CD8-positive, alpha-beta T cell (primary cell): ENCODE measurements at regions of chr12 and their contacts with region 1.

Region 1: GRCh38 chr12:92145731-92146496 is at the start of gene BTG1:
- DNase-seq: peak; percentile 96 to 100 (median 98)
- ATAC-seq: peak; percentile 72
- H3K4me3 ChIP-seq: peak within 1 kb of the TSS; percentile 91 to 95
- H3K4me3 Mint-ChIP-seq: peak within 1 kb of the TSS; percentile 96
- H3K27ac ChIP-seq: peak within 1 kb of the TSS; percentile 90 to 92
- H3K27ac Mint-ChIP-seq: peak within 1 kb of the TSS; percentile 99
- H3K4me1 ChIP-seq: peaks cover 23% of the 10 kb centered on the region
- H3K4me1 Mint-ChIP-seq: peaks cover 27% of the 10 kb centered on the region
- H3K27me3 ChIP-seq: no peaks in the 10 kb centered on the region
- H3K27me3 Mint-ChIP-seq: no peaks in the 10 kb centered on the region
- CTCF ChIP-seq: no peak
- total RNA-seq, gene BTG1: 1,847 to 1,850 TPM

Region 2: DNA sequence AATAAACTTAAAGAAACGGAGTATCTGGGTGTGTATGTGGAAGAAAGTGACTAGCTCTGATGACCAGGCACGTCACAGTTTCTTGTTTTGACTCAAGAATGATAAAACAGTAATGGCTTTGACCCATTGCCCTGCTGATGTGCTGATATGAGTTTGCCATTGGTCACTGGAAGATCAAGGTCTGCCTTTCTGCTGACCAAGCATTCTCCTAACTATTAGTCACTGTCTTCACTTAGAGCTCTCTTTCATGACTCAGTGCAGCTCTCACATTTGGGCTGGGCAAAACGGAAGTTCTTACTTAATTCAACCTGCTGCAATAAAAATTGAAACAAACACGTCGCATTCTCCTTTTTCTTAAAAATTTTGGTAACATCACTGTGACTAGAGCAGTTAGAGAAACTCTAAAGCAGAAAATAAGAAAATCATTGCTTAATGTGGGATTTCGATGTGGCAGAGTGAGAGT is 366.9 kb before region 1 on chr12:
- CTCF ChIA-PET with region 1: no interaction called
- POLR2A ChIA-PET with region 1: interaction called, 15 read pairs
- intact Hi-C with region 1: no loop called
- DNase-seq: peak in 8 of 9 experiments; percentile 0 to 68 (median 46)
- ATAC-seq: peak; percentile 85
- H3K4me3 ChIP-seq: peak overlapping the region; percentile 18 to 28
- H3K4me3 Mint-ChIP-seq: peak overlapping the region; percentile 71
- H3K27ac ChIP-seq: peak overlapping the region; percentile 54 to 62
- H3K27ac Mint-ChIP-seq: peak overlapping the region; percentile 92
- H3K4me1 ChIP-seq: peaks cover 28% of the 10 kb centered on the region
- H3K4me1 Mint-ChIP-seq: peaks cover 46% of the 10 kb centered on the region
- H3K27me3 ChIP-seq: no peaks in the 10 kb centered on the region
- H3K27me3 Mint-ChIP-seq: no peaks in the 10 kb centered on the region
- CTCF ChIP-seq: no peak

Region 3: DNA sequence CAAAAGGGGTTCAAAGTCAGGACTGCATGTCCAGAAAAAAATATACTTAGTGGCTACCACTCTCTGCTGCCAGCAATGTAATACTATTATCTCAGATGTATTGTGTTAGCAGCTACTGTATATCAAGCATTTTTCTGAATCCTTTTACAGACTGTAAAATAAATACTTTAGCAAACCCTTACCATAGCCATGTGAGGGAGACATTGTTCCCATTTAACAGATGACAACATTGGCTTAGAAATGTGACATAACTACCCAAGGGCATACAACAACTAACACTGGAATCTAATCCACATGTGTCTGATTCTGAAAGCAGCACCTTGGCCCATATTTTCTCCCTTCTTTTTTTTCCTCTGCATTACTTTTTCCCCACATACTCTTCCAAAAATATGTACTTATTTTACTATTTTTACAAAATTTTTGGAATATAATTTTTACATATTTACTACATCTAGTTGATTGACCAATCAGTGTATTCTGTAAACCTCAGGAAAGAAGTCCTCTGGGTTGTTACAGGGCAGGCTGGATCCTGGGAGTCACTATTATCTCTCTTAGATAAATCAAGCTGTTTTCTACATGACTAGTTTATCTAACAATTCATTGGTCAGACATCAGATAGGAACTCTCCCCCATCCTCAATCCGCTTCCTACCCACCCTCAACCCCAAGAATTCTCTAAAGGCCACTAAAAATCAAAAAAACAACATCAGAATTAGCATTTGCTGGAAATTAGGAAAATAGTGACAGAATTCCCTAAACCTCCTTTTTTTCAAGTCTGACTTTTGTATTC is 154.3 kb before region 1 on chr12:
- CTCF ChIA-PET with region 1: interaction called, 6 read pairs
- POLR2A ChIA-PET with region 1: interaction called, 41 read pairs
- intact Hi-C with region 1: loop called in 1 of 2 experiments (anchors 1 kb)
- DNase-seq: peak in 2 of 9 experiments; percentile 61 to 77
- ATAC-seq: peak; percentile 71
- H3K4me3 ChIP-seq: no peak overlapping the region
- H3K4me3 Mint-ChIP-seq: no peak overlapping the region
- H3K27ac ChIP-seq: no peak overlapping the region
- H3K27ac Mint-ChIP-seq: peak overlapping the region; percentile 66
- H3K4me1 ChIP-seq: peaks cover 25% of the 10 kb centered on the region
- H3K4me1 Mint-ChIP-seq: peaks cover 65% of the 10 kb centered on the region
- H3K27me3 ChIP-seq: no peaks in the 10 kb centered on the region
- H3K27me3 Mint-ChIP-seq: no peaks in the 10 kb centered on the region
- CTCF ChIP-seq: peak; percentile 28

Region 4: GRCh38 chr12:92158796-92159439 is 13.0 kb after region 1 on chr12:
- CTCF ChIA-PET with region 1: interaction called, 3 read pairs
- POLR2A ChIA-PET with region 1: interaction called, 20 read pairs
- intact Hi-C with region 1: no loop called
- DNase-seq: peak in 1 of 9 experiments; percentile 44
- ATAC-seq: peak; percentile 57
- H3K4me3 ChIP-seq: no peak overlapping the region
- H3K4me3 Mint-ChIP-seq: peak overlapping the region; percentile 62
- H3K27ac ChIP-seq: peak overlapping the region; percentile 6 to 54
- H3K27ac Mint-ChIP-seq: peak overlapping the region; percentile 90
- H3K4me1 ChIP-seq: peaks cover 49% of the 10 kb centered on the region
- H3K4me1 Mint-ChIP-seq: peaks cover 69% of the 10 kb centered on the region
- H3K27me3 ChIP-seq: no peaks in the 10 kb centered on the region
- H3K27me3 Mint-ChIP-seq: no peaks in the 10 kb centered on the region
- CTCF ChIP-seq: no peak

Region 5: DNA sequence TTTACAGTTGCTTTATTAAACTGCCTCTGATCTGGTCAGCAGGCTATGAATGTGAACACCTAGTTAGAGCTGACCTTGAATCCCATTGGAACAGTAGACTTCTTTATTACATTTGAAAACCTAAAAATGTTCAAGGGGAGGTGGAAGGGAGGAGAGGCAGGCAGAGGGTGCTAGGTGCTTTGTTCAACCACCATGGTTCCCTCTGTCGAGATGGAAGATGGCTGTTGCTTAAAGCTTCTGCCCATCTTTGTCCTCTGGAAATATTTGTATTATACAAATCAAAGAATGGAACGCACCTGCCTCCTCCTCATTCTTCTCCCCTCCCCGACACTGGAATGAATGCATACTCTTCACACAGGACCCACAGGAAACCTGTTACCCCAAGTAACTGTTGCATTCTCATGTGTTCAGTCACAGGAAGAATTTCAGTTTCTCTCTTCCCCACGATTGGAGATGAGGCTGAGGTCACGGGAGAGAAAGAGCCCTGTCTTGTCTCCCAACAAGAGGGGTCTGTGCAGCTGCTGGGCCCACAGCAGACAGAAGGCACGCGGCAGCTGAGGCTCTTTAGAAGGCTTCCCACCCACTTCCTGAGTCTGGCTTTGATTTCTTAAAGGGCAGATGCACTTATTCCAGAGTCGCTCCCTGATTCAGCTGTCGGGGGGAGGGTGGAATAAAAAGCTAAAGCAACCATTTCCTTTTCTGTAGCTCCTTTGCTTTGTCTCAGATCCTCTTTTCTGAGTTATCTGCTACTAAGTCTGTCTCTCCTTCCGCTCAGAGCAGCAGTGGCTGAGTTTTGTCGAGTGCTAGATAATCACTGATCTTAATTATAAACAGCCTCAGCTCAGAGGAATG is 217.6 kb after region 1 on chr12:
- CTCF ChIA-PET with region 1: interaction called, 5 read pairs
- POLR2A ChIA-PET with region 1: interaction called, 46 read pairs
- intact Hi-C with region 1: loop called in 1 of 2 experiments (anchors 2 kb)
- DNase-seq: peak; percentile 10 to 75 (median 61)
- ATAC-seq: peak; percentile 70
- H3K4me3 ChIP-seq: peak overlapping the region; percentile 27 to 39
- H3K4me3 Mint-ChIP-seq: peak overlapping the region; percentile 71
- H3K27ac ChIP-seq: peak overlapping the region; percentile 52 to 75
- H3K27ac Mint-ChIP-seq: peak overlapping the region; percentile 95
- H3K4me1 ChIP-seq: peaks cover 58% of the 10 kb centered on the region
- H3K4me1 Mint-ChIP-seq: peaks cover 71% of the 10 kb centered on the region
- H3K27me3 ChIP-seq: no peaks in the 10 kb centered on the region
- H3K27me3 Mint-ChIP-seq: no peaks in the 10 kb centered on the region
- CTCF ChIP-seq: no peak

Region 6: DNA sequence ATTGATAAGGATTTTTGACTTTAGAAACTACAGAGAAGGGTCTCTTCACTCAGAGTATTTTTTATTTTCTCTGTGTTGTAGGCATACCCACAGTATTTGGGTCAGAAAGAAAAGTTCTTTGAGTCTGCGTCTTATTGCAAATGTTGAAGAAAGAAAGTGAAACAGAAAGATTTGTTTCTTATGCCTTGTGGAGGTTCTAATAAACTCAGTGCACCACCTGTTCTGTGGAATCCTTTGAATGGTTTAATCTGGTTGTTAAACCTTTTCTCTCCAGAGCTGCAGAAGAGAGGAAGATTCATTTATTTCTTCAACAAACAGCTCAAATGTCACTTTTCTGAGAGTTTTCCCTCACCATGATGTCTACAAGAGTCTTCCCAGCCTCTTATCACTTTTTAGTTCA is 410.2 kb after region 1 on chr12:
- CTCF ChIA-PET with region 1: no interaction called
- POLR2A ChIA-PET with region 1: interaction called, 13 read pairs
- intact Hi-C with region 1: no loop called
- DNase-seq: peak in 1 of 9 experiments; percentile 56
- ATAC-seq: peak; percentile 79
- H3K4me3 ChIP-seq: peak overlapping the region; percentile 2 to 40
- H3K4me3 Mint-ChIP-seq: peak overlapping the region; percentile 76
- H3K27ac ChIP-seq: peak overlapping the region; percentile 28 to 45
- H3K27ac Mint-ChIP-seq: peak overlapping the region; percentile 86
- H3K4me1 ChIP-seq: peaks cover 27% of the 10 kb centered on the region
- H3K4me1 Mint-ChIP-seq: peaks cover 33% of the 10 kb centered on the region
- H3K27me3 ChIP-seq: no peaks in the 10 kb centered on the region
- H3K27me3 Mint-ChIP-seq: no peaks in the 10 kb centered on the region
- CTCF ChIP-seq: no peak

Region 7: GRCh38 chr12:92928962-92929915 is 783.3 kb after region 1 on chr12 and contains the start of gene EEA1:
- CTCF ChIA-PET with region 1: no interaction called
- POLR2A ChIA-PET with region 1: no interaction called
- intact Hi-C with region 1: loop called in 1 of 2 experiments (anchors 5 kb)
- DNase-seq: peak; percentile 88 to 97 (median 95)
- ATAC-seq: peak; percentile 84
- H3K4me3 ChIP-seq: peak within 1 kb of the TSS; percentile 71 to 78
- H3K4me3 Mint-ChIP-seq: peak within 1 kb of the TSS; percentile 85
- H3K27ac ChIP-seq: peak within 1 kb of the TSS; percentile 85 to 90
- H3K27ac Mint-ChIP-seq: peak within 1 kb of the TSS; percentile 95
- H3K4me1 ChIP-seq: peaks cover 26% of the 10 kb centered on the region
- H3K4me1 Mint-ChIP-seq: peaks cover 40% of the 10 kb centered on the region
- H3K27me3 ChIP-seq: no peaks in the 10 kb centered on the region
- H3K27me3 Mint-ChIP-seq: no peaks in the 10 kb centered on the region
- CTCF ChIP-seq: no peak
- total RNA-seq, gene EEA1: 4.3 to 6.9 TPM